Heart left ventricle (tissue), 16 donors: ENCODE measurements at regions of chr14 and their contacts with region 1.

Region 1: DNA sequence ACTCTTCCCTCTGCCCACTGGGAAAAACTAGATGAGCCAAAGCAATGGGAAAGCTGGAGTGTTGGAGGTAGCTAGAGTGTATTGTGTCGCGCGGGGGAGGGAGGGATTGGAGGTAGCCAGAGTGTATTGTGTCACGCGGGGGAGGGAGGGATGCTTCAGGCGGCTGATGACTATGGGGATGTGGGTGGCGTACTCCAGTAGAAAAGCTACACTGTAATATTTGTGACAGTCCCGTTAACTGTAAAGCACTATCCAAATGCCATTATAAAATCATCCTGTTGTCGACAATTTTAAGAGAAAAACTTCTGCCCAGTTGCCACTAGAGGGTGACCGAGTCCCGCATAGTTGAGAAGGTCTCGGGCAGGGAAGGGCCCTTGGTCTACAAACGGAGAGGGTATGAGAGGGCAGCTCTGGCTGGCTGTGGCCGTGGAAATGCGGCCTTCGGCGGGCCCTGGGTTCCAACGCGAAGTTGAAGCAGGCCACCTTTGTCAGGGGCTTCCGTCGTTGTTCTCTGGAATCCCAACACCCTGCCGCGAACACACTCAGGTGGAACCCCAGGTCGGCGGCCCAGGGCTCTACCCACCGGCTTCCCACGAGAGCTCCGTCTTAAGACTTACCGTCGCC is 15.1 kb upstream of the PLEK2 start:
- DNase-seq: peak; percentile 68 to 80 (median 74)
- ATAC-seq: peak; percentile 73 to 92 (median 85)
- H3K4me3 ChIP-seq: no peak overlapping the region
- H3K27ac ChIP-seq: no peak overlapping the region
- H3K4me1 ChIP-seq: peaks cover 0 to 12% (median 5%) of the 10 kb centered on the region in 12 donors
- H3K27me3 ChIP-seq: peaks cover 0 to 12% (median 0%) of the 10 kb centered on the region in 9 donors
- CTCF ChIP-seq: peak; percentile 66 to 83 (median 77)
- POLR2A ChIP-seq: no peak

Region 2: GRCh38 chr14:67446120-67447032 is 19.3 kb after region 1 on chr14:
- intact Hi-C with region 1: no loop called
- DNase-seq: peak in 4 of 5 donors; percentile 34 to 61 (median 42)
- ATAC-seq: peak; percentile 71 to 88 (median 76)
- H3K4me3 ChIP-seq: peak overlapping the region in 2 of 12 donors; percentile 3 to 5
- H3K27ac ChIP-seq: peak overlapping the region in 11 of 12 donors; percentile 13 to 81 (median 67)
- H3K4me1 ChIP-seq: peaks cover 0 to 34% (median 5%) of the 10 kb centered on the region in 12 donors
- H3K27me3 ChIP-seq: no peaks in the 10 kb centered on the region
- CTCF ChIP-seq: no peak
- POLR2A ChIP-seq: no peak

Region 3: DNA sequence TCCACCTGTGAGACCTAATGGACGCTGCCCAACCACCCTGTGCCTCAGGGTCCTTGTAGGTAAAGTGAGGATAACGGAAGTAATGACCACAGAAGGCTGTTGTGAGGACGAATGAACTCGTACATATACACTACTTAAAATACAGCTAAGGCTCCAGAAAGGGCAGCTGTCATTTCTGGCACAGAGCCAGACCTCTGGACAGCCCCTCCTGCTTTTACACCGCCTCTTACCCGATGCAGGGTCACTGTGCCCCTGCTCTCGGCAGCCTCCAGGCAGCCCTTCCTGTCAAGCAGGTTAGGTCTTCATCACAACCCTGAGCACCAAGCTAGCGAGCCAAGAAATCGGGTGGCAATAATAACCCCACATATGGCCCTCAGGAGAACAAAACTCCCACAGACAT is 52.9 kb after region 1 on chr14:
- intact Hi-C with region 1: loop called in 4 of 10 experiments (anchors 2 to 5 kb)
- DNase-seq: no peak
- ATAC-seq: no peak
- H3K4me3 ChIP-seq: no peak overlapping the region
- H3K27ac ChIP-seq: no peak overlapping the region
- H3K4me1 ChIP-seq: peaks cover 0 to 17% (median 0%) of the 10 kb centered on the region in 12 donors
- H3K27me3 ChIP-seq: no peaks in the 10 kb centered on the region
- CTCF ChIP-seq: no peak
- POLR2A ChIP-seq: no peak

Region 4: GRCh38 chr14:67487937-67488893 is 61.1 kb after region 1 on chr14 and contains the start of gene TMEM229B:
- intact Hi-C with region 1: loop called in 5 of 10 experiments (anchors 2 to 5 kb)
- DNase-seq: peak; percentile 35 to 61 (median 46)
- ATAC-seq: peak in 3 of 4 donors; percentile 49 to 70 (median 50)
- H3K4me3 ChIP-seq: peak within 1 kb of the TSS; percentile 26 to 66 (median 49)
- H3K27ac ChIP-seq: peak within 1 kb of the TSS; percentile 31 to 91 (median 70)
- H3K4me1 ChIP-seq: peaks cover 0 to 50% (median 15%) of the 10 kb centered on the region in 12 donors
- H3K27me3 ChIP-seq: no peaks in the 10 kb centered on the region
- CTCF ChIP-seq: no peak
- POLR2A ChIP-seq: no peak
- total RNA-seq, gene TMEM229B: 0.69 to 6.5 (median 2.0) TPM

Region 5: DNA sequence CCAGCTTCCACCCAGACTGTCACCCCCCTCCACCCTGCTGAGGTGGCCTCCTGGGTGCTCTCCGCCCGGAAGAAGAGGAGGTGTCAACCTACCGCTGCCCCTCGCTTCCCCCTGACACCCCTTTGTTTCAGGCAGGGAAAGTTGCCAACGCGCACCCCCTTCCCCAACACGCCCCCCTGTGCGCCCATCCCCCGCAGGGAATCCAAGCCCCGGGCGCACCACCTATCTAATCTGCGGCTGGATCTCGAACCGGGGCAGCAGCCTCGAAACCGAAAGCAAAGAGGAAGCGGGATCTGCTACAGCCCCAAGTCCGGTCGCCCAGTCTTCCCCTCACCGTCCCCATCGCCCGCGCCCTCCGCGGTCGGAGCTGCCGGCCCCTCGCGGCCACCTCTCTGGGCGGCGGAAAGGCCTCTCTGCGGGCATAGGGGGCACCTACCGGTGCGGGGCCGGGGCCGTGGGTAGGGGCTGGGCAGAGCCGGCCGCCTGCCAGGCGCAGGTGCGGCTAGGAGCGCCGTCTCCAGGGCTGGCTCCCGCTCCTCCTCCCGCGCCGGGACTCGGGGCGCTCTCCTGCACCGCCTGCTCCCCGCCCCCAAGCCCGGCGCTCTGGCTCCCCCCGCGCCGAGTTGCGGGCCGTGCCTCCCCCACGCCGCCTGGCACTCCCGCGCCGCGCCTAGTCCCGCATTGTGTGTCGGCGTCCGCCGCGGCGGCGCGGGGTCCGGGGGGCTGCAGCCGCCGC is 87.7 kb after region 1 on chr14:
- intact Hi-C with region 1: loop called in 1 of 10 experiments (anchors 5 kb)
- DNase-seq: peak; percentile 33 to 69 (median 40)
- ATAC-seq: peak; percentile 20 to 58 (median 56)
- H3K4me3 ChIP-seq: peak overlapping the region; percentile 58 to 96 (median 91)
- H3K27ac ChIP-seq: peak overlapping the region in 7 of 12 donors; percentile 8 to 87 (median 60)
- H3K4me1 ChIP-seq: peaks cover 0 to 31% (median 7%) of the 10 kb centered on the region in 12 donors
- H3K27me3 ChIP-seq: peaks cover 0 to 19% (median 0%) of the 10 kb centered on the region in 9 donors
- CTCF ChIP-seq: no peak
- POLR2A ChIP-seq: no peak

Region 6: DNA sequence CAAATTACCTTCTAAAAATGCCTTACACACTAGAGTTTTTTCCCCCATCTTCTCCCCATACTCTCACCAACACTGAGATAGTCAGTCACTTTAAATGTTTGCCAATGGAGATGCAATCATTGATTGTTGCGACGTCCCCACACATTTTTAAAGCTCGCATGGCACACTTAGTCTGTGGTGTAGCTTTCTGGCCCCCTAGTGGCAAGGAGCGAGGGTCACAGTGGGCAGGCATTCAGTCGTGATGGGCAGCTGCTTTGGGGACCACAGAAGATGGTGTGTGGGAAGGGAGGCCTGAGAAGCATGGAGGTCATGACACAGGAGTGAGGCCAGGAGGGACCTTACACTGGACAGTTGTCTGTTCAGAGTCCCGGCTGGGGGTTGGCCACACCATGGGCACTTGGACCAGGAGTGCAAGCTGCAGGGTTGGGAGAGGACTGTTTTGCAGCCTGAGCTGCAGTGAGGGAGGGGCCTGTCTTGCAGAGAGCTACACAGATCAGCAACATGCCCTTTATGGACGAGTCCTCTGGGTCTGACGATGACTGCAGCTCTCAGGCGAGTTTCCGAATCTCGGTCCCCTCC is 144.3 kb after region 1 on chr14:
- intact Hi-C with region 1: loop called (anchors 1 to 5 kb)
- DNase-seq: peak; percentile 47 to 74 (median 63)
- ATAC-seq: peak; percentile 70 to 82 (median 73)
- H3K4me3 ChIP-seq: no peak overlapping the region
- H3K27ac ChIP-seq: no peak overlapping the region
- H3K4me1 ChIP-seq: no peaks in the 10 kb centered on the region
- H3K27me3 ChIP-seq: no peaks in the 10 kb centered on the region
- CTCF ChIP-seq: peak; percentile 67 to 89 (median 80)
- POLR2A ChIP-seq: no peak

Region 7: DNA sequence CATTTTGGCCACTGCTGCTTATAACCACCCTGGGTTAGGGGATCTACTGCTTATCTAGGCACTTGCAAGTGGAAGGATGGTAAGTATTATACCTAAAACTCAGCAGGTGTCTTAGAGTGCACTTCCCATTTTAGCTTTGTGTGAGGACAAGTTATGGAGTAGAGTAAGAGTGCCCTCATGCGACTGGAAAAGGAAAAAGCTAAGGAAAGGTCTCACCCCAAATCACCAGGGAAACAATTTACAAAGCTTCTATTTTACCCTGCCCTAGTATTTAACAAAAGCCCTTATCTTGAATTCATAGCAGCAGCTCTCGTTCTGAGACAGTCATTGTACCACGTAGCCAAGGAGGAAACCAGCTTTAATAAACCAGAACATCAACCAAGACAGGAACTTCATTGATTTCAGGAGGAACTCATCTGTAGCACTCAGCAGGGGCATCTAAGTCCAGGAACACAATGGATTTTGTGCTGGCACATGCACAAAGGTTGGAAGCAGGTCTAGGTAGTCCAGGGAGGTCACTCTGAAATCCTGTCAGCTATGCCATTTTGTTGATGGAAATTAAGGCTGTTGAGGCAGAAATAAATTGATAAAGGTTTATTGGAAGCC is 277.5 kb after region 1 on chr14:
- intact Hi-C with region 1: loop called in 5 of 10 experiments (anchors 5 to 10 kb)
- DNase-seq: no peak
- ATAC-seq: peak; percentile 58 to 85 (median 75)
- H3K4me3 ChIP-seq: no peak overlapping the region
- H3K27ac ChIP-seq: no peak overlapping the region
- H3K4me1 ChIP-seq: peaks cover 0 to 6% (median 0%) of the 10 kb centered on the region in 12 donors
- H3K27me3 ChIP-seq: no peaks in the 10 kb centered on the region
- CTCF ChIP-seq: peak; percentile 59 to 81 (median 70)
- POLR2A ChIP-seq: no peak